ENCODE measurements at regions of chr1 and their contacts with region 1.

Region 1: DNA sequence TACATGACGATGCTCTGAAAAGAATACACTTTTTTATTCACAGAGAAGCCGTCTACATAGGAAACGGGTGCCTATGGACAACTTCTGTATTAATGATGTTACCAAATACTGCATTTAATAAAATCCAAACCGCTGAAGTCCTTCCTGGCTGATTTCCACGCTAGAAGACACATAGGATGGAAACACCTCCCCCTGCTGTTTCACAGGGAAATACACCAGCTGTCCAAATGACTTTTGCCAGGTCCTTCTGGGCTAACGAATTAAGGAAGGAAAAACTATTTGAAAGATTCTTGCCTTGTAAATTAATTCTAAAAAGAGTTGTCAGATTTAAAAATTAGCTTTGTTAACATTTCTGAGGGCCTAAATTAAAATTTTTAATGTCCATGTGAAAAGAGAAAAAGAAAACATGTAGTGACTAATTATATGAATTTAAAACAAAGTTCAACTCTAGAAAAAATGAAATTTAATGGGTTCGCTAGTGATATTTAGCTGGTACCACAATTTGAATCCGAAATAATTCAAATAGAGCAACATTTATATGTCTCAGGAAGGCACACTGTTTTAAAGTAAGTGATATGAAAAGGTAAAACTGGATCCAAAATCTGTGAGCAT is 146.0 kb downstream of the RERE start:
- DNase-seq: no peak
- H3K4me3 Mint-ChIP-seq: no peak overlapping the region
- H3K27ac Mint-ChIP-seq: no peak overlapping the region
- H3K4me1 Mint-ChIP-seq: peaks cover 43% of the 10 kb centered on the region
- H3K27me3 Mint-ChIP-seq: no peaks in the 10 kb centered on the region

Region 2: GRCh38 chr1:8516793-8517556 is 154.4 kb before region 1 on chr1:
- CTCF ChIA-PET with region 1: no interaction called
- POLR2A ChIA-PET with region 1: no interaction called
- intact Hi-C with region 1: no loop called
- DNase-seq: peak; percentile 56
- H3K4me3 Mint-ChIP-seq: no peak overlapping the region
- H3K27ac Mint-ChIP-seq: peak overlapping the region; percentile 36
- H3K4me1 Mint-ChIP-seq: peaks cover 56% of the 10 kb centered on the region
- H3K27me3 Mint-ChIP-seq: no peaks in the 10 kb centered on the region

Region 3: GRCh38 chr1:8560611-8561544 is 110.5 kb before region 1 on chr1:
- CTCF ChIA-PET with region 1: interaction called, 89 read pairs
- POLR2A ChIA-PET with region 1: no interaction called
- intact Hi-C with region 1: loop called (anchors 1 kb)
- DNase-seq: no peak
- H3K4me3 Mint-ChIP-seq: no peak overlapping the region
- H3K27ac Mint-ChIP-seq: peak overlapping the region; percentile 50
- H3K4me1 Mint-ChIP-seq: peaks cover 41% of the 10 kb centered on the region
- H3K27me3 Mint-ChIP-seq: no peaks in the 10 kb centered on the region

Region 4: GRCh38 chr1:8649027-8649426 is 22.4 kb before region 1 on chr1:
- CTCF ChIA-PET with region 1: interaction called, 10 read pairs
- POLR2A ChIA-PET with region 1: interaction called, 4 read pairs
- intact Hi-C with region 1: no loop called
- DNase-seq: no peak
- H3K4me3 Mint-ChIP-seq: no peak overlapping the region
- H3K27ac Mint-ChIP-seq: no peak overlapping the region
- H3K4me1 Mint-ChIP-seq: peaks cover 47% of the 10 kb centered on the region
- H3K27me3 Mint-ChIP-seq: no peaks in the 10 kb centered on the region

Region 5: DNA sequence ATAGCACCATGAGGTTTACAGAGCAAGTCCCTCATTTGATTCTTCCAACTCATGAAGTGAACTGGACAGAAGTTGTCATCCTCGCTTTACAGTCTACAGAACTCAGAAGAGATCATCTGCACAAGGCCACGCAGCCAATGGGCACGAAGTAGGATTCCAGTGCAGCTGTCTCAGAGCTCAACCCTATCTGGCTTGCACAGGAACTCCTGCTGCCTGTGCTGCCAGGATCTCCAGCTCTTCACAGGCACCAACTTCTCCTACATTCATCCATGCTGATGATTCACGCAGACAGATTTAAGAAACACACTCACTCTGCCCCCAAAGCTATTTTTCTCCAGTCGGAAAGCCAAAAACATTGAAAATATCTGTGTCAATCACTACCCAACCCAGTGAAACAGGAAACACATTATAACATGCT is 11.0 kb before region 1 on chr1:
- CTCF ChIA-PET with region 1: interaction called, 12 read pairs
- POLR2A ChIA-PET with region 1: no interaction called
- intact Hi-C with region 1: no loop called
- DNase-seq: no peak
- H3K4me3 Mint-ChIP-seq: no peak overlapping the region
- H3K27ac Mint-ChIP-seq: no peak overlapping the region
- H3K4me1 Mint-ChIP-seq: peaks cover 3% of the 10 kb centered on the region
- H3K27me3 Mint-ChIP-seq: no peaks in the 10 kb centered on the region

Region 6: GRCh38 chr1:8718850-8719361 is 47.5 kb after region 1 on chr1:
- CTCF ChIA-PET with region 1: interaction called, 10 read pairs
- POLR2A ChIA-PET with region 1: no interaction called
- intact Hi-C with region 1: no loop called
- DNase-seq: no peak
- H3K4me3 Mint-ChIP-seq: no peak overlapping the region
- H3K27ac Mint-ChIP-seq: no peak overlapping the region
- H3K4me1 Mint-ChIP-seq: peaks cover 17% of the 10 kb centered on the region
- H3K27me3 Mint-ChIP-seq: no peaks in the 10 kb centered on the region

Region 7: DNA sequence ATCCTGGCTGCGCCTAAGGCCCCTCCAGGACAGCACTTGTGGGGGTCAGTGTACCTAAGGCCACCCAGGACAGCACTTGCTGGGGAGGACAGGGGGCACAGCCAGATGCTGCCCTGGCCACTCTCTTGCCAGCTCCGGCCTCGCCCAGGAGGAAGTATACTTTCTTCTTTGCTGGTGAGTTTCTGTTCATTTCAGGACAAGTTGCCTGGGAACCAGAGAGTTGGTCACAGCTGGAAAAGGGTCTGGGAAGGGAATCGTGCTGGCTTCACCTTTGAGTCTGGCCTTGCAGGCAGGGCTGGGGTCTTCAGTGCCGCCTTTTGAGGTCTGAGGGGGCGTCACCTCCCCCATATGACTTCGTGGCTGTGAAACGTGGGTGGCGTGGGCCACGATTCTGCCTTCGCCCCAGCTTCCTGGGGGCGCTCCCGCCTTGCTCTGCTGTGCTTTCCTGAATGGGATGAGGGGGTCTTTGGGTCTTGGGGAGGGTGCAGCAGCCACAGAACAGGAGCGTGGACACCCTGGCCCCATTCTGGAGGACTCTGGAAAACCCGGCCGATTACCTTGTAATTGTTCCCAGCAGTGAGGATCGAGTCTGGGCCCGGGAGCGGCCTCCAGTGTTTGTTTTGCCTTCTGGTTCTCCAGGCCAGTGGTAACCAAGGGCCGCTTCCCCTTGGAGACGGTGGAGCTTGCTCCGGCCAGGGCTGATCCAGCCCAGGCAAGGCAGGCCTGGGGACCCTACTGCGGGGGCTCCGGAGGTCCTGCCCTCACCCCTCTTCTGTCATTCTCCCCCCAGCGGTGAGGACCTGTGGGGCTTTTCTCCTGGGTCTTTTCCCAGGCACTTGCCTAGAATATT is 667.2 kb after region 1 on chr1:
- CTCF ChIA-PET with region 1: no interaction called
- POLR2A ChIA-PET with region 1: no interaction called
- intact Hi-C with region 1: no loop called
- DNase-seq: no peak
- H3K4me3 Mint-ChIP-seq: no peak overlapping the region
- H3K27ac Mint-ChIP-seq: no peak overlapping the region
- H3K4me1 Mint-ChIP-seq: no peaks in the 10 kb centered on the region
- H3K27me3 Mint-ChIP-seq: no peaks in the 10 kb centered on the region